ENCODE measurements at regions of chr18 and their contacts with region 1.

Region 1: GRCh38 chr18:58529714-58530354 is 99.1 kb downstream of the ALPK2 start:
- DNase-seq: no peak
- ATAC-seq: peak; percentile 55
- H3K4me3 ChIP-seq: no peak overlapping the region
- H3K27ac ChIP-seq: peak overlapping the region; percentile 20; the same call in 1 of the 2 replicates
- H3K4me1 ChIP-seq: peaks cover 30% of the 10 kb centered on the region
- H3K27me3 ChIP-seq: no peaks in the 10 kb centered on the region
- CTCF ChIP-seq: peak; percentile 83 to 97 (median 96)
- EP300 ChIP-seq: no peak
- POLR2A ChIP-seq: no peak
- RAD21 ChIP-seq: peak; percentile 98

Region 2: DNA sequence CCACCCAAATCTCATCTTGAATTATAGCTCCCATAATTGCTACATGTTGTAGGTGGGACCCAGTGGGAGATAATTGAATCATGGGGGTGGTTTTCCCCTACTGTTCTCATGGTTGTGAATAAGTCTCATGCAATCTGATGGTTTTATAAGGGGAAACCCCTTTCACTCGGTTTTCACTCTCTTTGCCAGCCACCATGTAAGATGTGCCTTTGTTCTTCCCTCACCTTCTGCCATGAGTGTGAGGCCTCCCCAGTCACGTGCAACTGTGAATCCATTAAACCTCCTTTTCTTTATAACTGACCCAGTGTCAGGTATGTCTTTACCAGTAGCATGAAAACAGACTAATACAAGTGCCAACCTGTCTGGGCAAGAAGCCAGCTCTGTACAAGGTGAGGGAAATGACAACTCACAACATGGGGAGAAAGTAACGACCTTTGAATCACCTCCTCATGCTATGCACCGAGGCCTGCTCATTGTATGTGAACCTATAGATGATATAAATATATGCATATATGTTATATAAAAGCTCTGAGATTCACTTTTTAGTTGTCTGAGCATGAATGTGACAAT is 63.1 kb before region 1 on chr18:
- CTCF ChIA-PET with region 1: no interaction called
- POLR2A ChIA-PET with region 1: no interaction called
- RAD21 ChIA-PET with region 1: no interaction called
- SMC1A ChIA-PET with region 1: no interaction called
- in situ Hi-C with region 1: no loop called
- intact Hi-C with region 1: no loop called
- DNase-seq: no peak
- ATAC-seq: no peak
- H3K4me3 ChIP-seq: no peak overlapping the region
- H3K27ac ChIP-seq: no peak overlapping the region
- H3K4me1 ChIP-seq: no peaks in the 10 kb centered on the region
- H3K27me3 ChIP-seq: peaks cover 0 to 4% of the 10 kb centered on the region in 2 experiments; a peak in 3 of 4 replicates
- CTCF ChIP-seq: no peak
- EP300 ChIP-seq: no peak
- POLR2A ChIP-seq: no peak
- RAD21 ChIP-seq: no peak

Region 3: GRCh38 chr18:58541789-58542425 is 12.1 kb after region 1 on chr18:
- CTCF ChIA-PET with region 1: interaction called, 56 read pairs
- POLR2A ChIA-PET with region 1: interaction called, 5 read pairs
- RAD21 ChIA-PET with region 1: interaction called, 57 read pairs
- SMC1A ChIA-PET with region 1: interaction called, 74 read pairs
- in situ Hi-C with region 1: no loop called
- intact Hi-C with region 1: loop called (anchors 1 kb)
- DNase-seq: peak; percentile 91
- ATAC-seq: peak; percentile 52
- H3K4me3 ChIP-seq: no peak overlapping the region
- H3K27ac ChIP-seq: peak overlapping the region; percentile 100
- H3K4me1 ChIP-seq: peaks cover 62% of the 10 kb centered on the region
- H3K27me3 ChIP-seq: no peaks in the 10 kb centered on the region
- CTCF ChIP-seq: no peak
- EP300 ChIP-seq: peak; percentile 75 to 91; a peak in 3 of 4 replicates
- POLR2A ChIP-seq: no peak
- RAD21 ChIP-seq: peak; percentile 24; the same call in 1 of the 2 replicates

Region 4: DNA sequence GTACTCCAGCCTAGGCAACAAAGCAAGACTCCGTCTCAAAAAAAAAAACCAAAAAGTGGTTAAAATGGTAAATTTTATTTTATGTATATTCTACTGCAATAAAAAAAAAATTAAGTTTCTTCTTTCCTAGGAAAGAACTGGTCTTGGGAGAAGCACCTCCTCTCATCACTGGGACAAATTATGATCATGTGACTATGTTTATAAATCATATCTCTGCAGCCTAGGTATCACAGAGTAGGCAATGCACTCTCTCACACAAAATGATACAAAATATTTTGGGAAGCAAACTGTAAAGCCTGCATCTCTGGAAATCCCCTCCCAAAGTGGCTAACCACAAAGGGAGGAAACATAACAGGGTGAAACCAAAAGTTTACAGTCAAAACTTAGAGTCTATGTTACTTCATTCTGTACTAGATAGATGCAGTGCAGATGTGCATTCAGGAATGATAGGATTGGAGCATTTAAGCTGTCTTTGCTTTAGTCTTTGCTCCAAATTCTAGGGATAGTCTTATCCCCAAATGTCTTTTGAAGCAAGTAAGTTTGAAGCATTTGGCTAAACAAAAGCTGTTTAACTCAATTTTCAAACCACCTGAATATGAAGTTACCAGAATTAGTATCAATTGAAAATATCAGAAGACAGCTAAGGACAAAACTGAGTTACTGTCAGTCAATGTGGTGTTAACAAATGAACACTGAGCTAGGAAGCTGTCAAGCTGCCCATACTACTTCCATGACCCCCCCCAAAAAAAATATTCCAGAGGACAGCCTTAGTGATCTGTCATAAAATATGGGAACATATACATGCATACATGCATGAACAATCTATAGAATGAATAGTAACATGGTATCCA is 120.4 kb after region 1 on chr18:
- CTCF ChIA-PET with region 1: interaction called, 15 read pairs
- POLR2A ChIA-PET with region 1: interaction called, 3 read pairs
- RAD21 ChIA-PET with region 1: interaction called, 4 read pairs
- SMC1A ChIA-PET with region 1: interaction called, 682 read pairs
- in situ Hi-C with region 1: loop called (anchors 5 kb)
- intact Hi-C with region 1: loop called (anchors 1 kb)
- DNase-seq: peak; percentile 80
- ATAC-seq: peak; percentile 81
- H3K4me3 ChIP-seq: 0 out of 2 replicates have a peak overlapping the region, but pooled peaks have one; percentile 12
- H3K27ac ChIP-seq: peak overlapping the region; percentile 80
- H3K4me1 ChIP-seq: peaks cover 24% of the 10 kb centered on the region
- H3K27me3 ChIP-seq: no peaks in the 10 kb centered on the region
- CTCF ChIP-seq: no peak
- EP300 ChIP-seq: peak; percentile 37 to 85; a peak in 3 of 4 replicates
- POLR2A ChIP-seq: no peak
- RAD21 ChIP-seq: 0 out of 2 replicates have a peak, but pooled peaks have one; percentile 1

Region 5: DNA sequence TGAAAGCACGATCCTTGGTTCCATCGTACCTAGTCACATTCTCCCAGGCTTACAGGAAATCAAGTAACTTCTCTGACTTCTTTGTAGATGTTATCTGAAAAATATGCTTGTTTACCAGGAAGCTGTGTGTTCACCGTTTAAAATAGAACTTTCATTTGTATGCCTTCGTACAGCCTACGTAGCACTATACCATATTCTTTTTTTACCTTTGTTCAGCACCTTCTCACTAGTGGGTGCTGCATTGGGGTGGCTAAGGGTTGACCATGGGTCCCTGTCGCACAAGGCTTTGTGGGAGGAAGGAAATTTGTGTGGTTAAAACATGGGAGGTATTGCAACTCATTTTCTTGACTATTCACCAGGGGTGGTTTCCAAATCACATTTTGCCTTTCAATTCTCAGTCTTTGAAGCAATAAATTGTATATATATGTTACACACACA is 158.1 kb after region 1 on chr18:
- CTCF ChIA-PET with region 1: interaction called, 17 read pairs
- POLR2A ChIA-PET with region 1: interaction called, 4 read pairs
- RAD21 ChIA-PET with region 1: interaction called, 7 read pairs
- SMC1A ChIA-PET with region 1: interaction called, 8 read pairs
- in situ Hi-C with region 1: no loop called
- intact Hi-C with region 1: no loop called
- DNase-seq: peak; percentile 73
- ATAC-seq: peak; percentile 93
- H3K4me3 ChIP-seq: no peak overlapping the region
- H3K27ac ChIP-seq: peak overlapping the region; percentile 78
- H3K4me1 ChIP-seq: peaks cover 10% of the 10 kb centered on the region
- H3K27me3 ChIP-seq: no peaks in the 10 kb centered on the region
- CTCF ChIP-seq: no peak
- EP300 ChIP-seq: peak in 1 of 2 experiments; percentile 46; a peak in 1 of 4 replicates
- POLR2A ChIP-seq: no peak
- RAD21 ChIP-seq: 0 out of 2 replicates have a peak, but pooled peaks have one; percentile 20

Region 6: DNA sequence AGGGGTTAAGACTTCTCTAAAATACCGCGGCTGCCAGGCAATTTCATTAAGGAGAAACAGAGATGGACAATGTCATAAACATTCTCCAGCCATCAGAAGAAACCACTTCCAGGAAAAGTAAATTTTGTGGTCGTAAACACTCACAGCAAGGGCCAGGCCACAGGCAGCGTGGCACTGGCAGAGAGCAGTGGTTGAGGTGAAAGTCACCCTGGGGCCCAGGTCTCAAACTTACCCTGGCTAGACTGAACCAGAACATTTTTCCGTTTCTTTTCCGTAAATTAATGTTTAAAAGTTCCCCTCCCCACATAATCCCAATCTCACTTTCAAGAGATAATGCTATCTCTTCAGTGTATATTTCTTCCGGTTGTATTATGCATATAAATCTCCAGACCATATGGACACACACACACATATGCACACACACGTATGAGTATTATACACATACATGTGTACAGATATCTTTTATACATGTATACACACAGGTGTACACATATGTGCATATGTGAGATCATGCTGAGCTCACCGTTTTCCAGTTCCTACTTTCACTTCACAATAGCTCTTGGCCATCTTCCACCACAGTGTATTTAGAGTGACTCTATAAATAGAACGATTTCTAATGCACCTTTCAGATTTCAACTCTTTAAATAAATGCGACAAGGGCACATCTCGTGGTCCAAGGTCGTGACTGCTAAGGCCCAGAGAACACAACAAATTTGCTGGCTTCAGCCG is 231.6 kb after region 1 on chr18:
- CTCF ChIA-PET with region 1: interaction called, 743 read pairs
- POLR2A ChIA-PET with region 1: interaction called, 25 read pairs
- RAD21 ChIA-PET with region 1: interaction called, 522 read pairs
- SMC1A ChIA-PET with region 1: interaction called, 629 read pairs
- in situ Hi-C with region 1: loop called (anchors 5 kb)
- intact Hi-C with region 1: loop called (anchors 1 kb)
- DNase-seq: peak; percentile 84
- ATAC-seq: peak; percentile 83
- H3K4me3 ChIP-seq: no peak overlapping the region
- H3K27ac ChIP-seq: peak overlapping the region; percentile 78
- H3K4me1 ChIP-seq: peaks cover 24% of the 10 kb centered on the region
- H3K27me3 ChIP-seq: no peaks in the 10 kb centered on the region; a peak in 2 of 4 replicates
- CTCF ChIP-seq: no peak
- EP300 ChIP-seq: peak; percentile 35 to 62; a peak in 3 of 4 replicates
- POLR2A ChIP-seq: no peak
- RAD21 ChIP-seq: peak; percentile 27; the same call in 1 of the 2 replicates

Region 7: GRCh38 chr18:59063300-59063906 is 533.6 kb after region 1 on chr18:
- CTCF ChIA-PET with region 1: interaction called, 4 read pairs
- POLR2A ChIA-PET with region 1: no interaction called
- RAD21 ChIA-PET with region 1: no interaction called
- SMC1A ChIA-PET with region 1: interaction called, 4 read pairs
- in situ Hi-C with region 1: loop called (anchors 5 kb)
- intact Hi-C with region 1: loop called (anchors 10 kb)
- DNase-seq: peak; percentile 31
- ATAC-seq: peak; percentile 37
- H3K4me3 ChIP-seq: no peak overlapping the region
- H3K27ac ChIP-seq: no peak overlapping the region
- H3K4me1 ChIP-seq: peaks cover 14% of the 10 kb centered on the region
- H3K27me3 ChIP-seq: no peaks in the 10 kb centered on the region; a peak in 3 of 4 replicates
- CTCF ChIP-seq: no peak
- EP300 ChIP-seq: no peak
- POLR2A ChIP-seq: no peak
- RAD21 ChIP-seq: no peak